Activated CD4-positive, alpha-beta T cell treated with anti-CD3 and anti-CD28 coated beads, Interleukin-2, amount 10 ng/mL, durations not matched to agents 24 days and 14 days (primary cell): ENCODE measurements at regions of chr2 and their contacts with region 1.

Region 1: GRCh38 chr2:176653479-176654443 is 384.5 kb downstream of the MTX2 start:
- DNase-seq: peak; percentile 69
- H3K4me3 Mint-ChIP-seq: no peak overlapping the region
- H3K27ac Mint-ChIP-seq: no peak overlapping the region
- H3K4me1 Mint-ChIP-seq: peaks cover 10% of the 10 kb centered on the region
- H3K27me3 Mint-ChIP-seq: peaks cover 46% of the 10 kb centered on the region

Region 2: DNA sequence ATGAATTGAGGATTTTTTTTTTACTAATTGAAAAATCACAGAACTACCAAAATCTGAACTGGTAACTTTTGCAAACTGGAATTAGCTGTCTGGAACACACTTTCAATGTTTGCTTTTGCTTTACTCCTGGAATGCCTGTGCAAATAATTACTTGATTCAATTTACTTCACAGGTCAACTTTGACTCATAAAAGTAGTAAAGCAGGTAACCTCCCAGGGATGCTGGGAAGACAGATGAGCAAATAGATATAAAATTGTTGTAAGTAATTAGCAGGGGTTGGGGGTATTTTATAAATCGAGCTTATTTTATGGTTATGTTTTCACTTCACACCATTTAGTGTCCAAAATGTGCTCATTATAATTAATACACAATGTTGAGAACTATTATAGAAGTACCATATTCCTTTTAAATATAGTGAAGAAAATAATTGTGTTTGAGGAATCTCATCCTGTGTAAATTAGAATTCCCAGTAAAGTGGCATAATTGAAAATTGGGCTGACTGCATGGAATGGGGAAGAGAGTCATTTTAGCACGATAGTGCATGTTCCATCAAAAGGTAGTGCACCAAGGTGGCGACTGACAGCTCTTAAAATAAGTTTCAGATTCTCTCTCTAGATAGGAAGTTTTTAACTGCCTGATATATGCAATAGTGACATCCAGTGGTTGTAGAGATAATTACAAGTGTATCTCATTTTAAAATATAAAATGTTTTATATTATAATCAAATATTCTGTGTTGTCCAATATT is 160.7 kb after region 1 on chr2:
- intact Hi-C with region 1: loop called (anchors 10 kb)
- DNase-seq: peak; percentile 61
- H3K4me3 Mint-ChIP-seq: no peak overlapping the region
- H3K27ac Mint-ChIP-seq: no peak overlapping the region
- H3K4me1 Mint-ChIP-seq: peaks cover 8% of the 10 kb centered on the region
- H3K27me3 Mint-ChIP-seq: peaks cover 3% of the 10 kb centered on the region